Naive thymus-derived CD8-positive, alpha-beta T cell (primary cell): ENCODE measurements at regions of chr13 and their contacts with region 1.

Region 1: DNA sequence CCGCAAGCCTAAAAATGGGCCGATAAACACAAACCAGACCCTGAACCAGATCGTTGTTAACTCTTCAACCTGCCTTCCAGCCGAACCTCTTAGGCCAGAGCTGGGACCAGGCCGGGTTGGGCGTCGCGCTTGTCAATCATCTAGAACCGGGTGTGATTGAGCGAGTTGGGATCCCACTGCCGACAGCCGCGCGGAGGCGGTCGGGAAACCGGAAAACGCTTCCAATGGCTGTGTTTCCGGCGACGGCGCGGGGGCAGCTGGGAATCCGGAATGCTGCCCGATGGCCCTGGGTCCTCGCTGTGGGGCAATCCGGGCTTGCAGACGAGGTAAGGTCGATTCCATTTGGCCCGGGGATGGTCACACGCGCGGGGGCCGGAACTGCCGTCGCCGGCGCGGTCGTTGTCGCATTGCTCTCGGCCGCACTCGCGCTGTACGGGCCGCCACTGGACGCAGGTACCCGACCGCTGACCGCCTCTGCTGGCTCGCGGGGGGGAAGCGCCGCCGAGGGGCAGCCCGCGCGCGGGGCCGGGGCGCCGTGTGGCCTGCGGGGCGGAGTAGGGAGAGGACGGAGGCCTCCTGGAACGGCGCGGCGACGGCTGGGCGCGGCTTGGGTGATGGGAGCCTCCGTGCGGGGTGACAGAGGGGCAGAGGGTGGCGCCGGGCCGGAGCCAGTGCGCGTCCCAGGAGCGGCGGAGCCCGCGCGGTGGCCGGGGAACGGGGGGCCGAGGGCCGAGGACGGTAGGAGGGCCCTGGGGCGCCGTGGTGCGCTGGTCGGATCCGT is at the start of gene NAXD:
- DNase-seq: peak; percentile 56 to 90 (median 72)
- ATAC-seq: peak; percentile 89
- H3K4me3 Mint-ChIP-seq: peak within 1 kb of the TSS; percentile 82 to 97 (median 94)
- H3K27ac Mint-ChIP-seq: peak within 1 kb of the TSS; percentile 89 to 98 (median 95)
- H3K4me1 Mint-ChIP-seq: peaks cover 6 to 42% (median 38%) of the 10 kb centered on the region in 4 donors
- H3K27me3 Mint-ChIP-seq: peaks cover 0 to 2% (median 0%) of the 10 kb centered on the region in 5 donors
- polyA plus RNA-seq, gene NAXD: 10.4 to 26.9 (median 18.1) TPM

Region 2: GRCh38 chr13:110347535-110348308 is 267.8 kb before region 1 on chr13:
- POLR2A ChIA-PET with region 1: no interaction called
- DNase-seq: no peak
- ATAC-seq: no peak
- H3K4me3 Mint-ChIP-seq: no peak overlapping the region
- H3K27ac Mint-ChIP-seq: peak overlapping the region in 1 of 10 donors; percentile 57
- H3K4me1 Mint-ChIP-seq: peaks cover 0 to 2% (median 0%) of the 10 kb centered on the region in 4 donors
- H3K27me3 Mint-ChIP-seq: peaks cover 0 to 15% (median 8%) of the 10 kb centered on the region in 5 donors

Region 3: GRCh38 chr13:110625771-110626321 is 10.3 kb after region 1 on chr13:
- POLR2A ChIA-PET with region 1: interaction called, 10 read pairs
- DNase-seq: no peak
- ATAC-seq: no peak
- H3K4me3 Mint-ChIP-seq: no peak overlapping the region
- H3K27ac Mint-ChIP-seq: peak overlapping the region in 5 of 10 donors; percentile 6 to 58 (median 49)
- H3K4me1 Mint-ChIP-seq: peaks cover 32 to 70% (median 54%) of the 10 kb centered on the region in 4 donors
- H3K27me3 Mint-ChIP-seq: no peaks in the 10 kb centered on the region